Activated CD4-positive, alpha-beta T cell treated with anti-CD3 and anti-CD28 coated beads, Interleukin-2, amount 10 ng/mL, durations not matched to agents 7 days and 5 days (primary cell): ENCODE measurements at regions of chr1 and their contacts with region 1.

Region 1: GRCh38 chr1:6423321-6423999 is 1.1 kb upstream of the ESPN start:
- DNase-seq: peak; percentile 73
- H3K4me3 Mint-ChIP-seq: no peak overlapping the region
- H3K27ac Mint-ChIP-seq: no peak overlapping the region
- H3K4me1 Mint-ChIP-seq: peaks cover 15% of the 10 kb centered on the region
- H3K27me3 Mint-ChIP-seq: peaks cover 53% of the 10 kb centered on the region

Region 2: GRCh38 chr1:6401673-6402072 is 21.8 kb before region 1 on chr1:
- CTCF ChIA-PET with region 1: interaction called, 13 read pairs
- POLR2A ChIA-PET with region 1: no interaction called
- DNase-seq: no peak
- H3K4me3 Mint-ChIP-seq: no peak overlapping the region
- H3K27ac Mint-ChIP-seq: no peak overlapping the region
- H3K4me1 Mint-ChIP-seq: peaks cover 15% of the 10 kb centered on the region
- H3K27me3 Mint-ChIP-seq: peaks cover 10% of the 10 kb centered on the region

Region 3: DNA sequence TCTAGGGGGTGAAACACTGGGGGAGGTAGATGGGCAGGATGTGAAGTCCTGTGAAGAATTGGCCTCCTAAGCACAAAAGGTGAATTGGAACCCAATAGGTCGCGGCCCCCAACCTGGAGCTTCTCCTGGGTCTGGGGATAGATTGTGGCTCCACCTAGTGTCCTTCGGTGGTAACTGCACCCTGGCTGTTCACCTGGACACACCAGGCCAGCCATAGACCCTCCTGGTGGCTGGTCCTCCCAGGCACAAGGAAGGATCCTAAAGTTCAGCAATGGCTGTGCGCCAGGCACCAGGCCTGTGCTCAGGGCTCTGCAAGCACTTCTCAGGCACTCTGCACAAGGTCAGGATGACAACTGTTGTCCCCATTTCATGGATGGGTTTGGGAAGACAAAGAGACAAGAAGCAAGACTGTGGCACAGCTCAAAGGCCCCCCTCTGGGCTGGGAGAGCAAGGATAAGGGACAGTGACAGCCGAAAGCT is 14.6 kb after region 1 on chr1:
- CTCF ChIA-PET with region 1: interaction called, 17 read pairs
- POLR2A ChIA-PET with region 1: no interaction called
- DNase-seq: peak; percentile 77
- H3K4me3 Mint-ChIP-seq: no peak overlapping the region
- H3K27ac Mint-ChIP-seq: no peak overlapping the region
- H3K4me1 Mint-ChIP-seq: peaks cover 7% of the 10 kb centered on the region
- H3K27me3 Mint-ChIP-seq: peaks cover 32% of the 10 kb centered on the region